ENCODE measurements at regions of chrX and their contacts with region 1.

Region 1: DNA sequence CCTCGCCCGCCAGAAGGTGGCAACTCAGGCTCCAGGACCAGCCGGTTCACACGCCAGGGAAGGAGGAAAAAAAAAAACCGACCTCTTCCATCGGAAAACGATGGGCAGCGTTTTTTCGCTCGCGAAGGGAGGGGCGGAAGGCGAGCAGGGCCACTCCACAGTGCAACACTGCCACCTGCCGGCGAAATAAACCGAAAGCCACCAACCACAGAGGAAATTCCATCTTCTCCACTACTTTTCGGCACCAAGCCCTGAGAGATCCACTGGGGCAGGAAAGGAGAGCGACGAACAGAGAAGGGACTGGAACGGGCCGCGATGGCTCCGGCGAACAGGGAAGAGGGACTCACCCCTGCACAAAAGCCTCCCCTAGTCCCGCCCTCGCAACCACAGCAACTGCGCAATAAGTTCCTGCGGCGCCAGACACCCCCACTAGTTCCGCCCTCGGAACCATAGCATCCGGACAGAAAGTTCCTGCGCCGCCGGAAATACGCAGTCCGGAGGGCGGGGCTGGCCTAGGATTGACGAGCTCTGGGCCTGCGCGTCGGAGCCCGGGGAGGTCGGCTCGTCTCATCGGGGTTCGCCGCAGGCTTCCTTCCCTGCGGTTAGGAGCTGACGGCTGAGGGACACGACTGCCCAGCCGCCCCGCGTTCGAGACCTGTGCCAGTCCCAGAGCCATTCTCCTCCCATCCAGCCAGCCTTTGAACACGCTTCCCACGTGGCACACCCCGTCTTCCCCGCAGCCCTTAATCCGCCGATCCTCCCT is 23.4 kb downstream of the FAM156A start:
- DNase-seq: peak; percentile 79
- ATAC-seq: peak; percentile 98
- H3K4me3 ChIP-seq: peak overlapping the region; percentile 81
- H3K27ac ChIP-seq: peak overlapping the region; percentile 96
- H3K4me1 ChIP-seq: peaks cover 3% of the 10 kb centered on the region; the same call in 1 of the 2 replicates
- H3K27me3 ChIP-seq: no peaks in the 10 kb centered on the region
- CTCF ChIP-seq: peak; percentile 82 to 97 (median 91)
- EP300 ChIP-seq: peak in 1 of 2 experiments; percentile 27; a peak in 1 of 4 replicates
- POLR2A ChIP-seq: peak; percentile 89
- RAD21 ChIP-seq: peak; percentile 90

Region 2: DNA sequence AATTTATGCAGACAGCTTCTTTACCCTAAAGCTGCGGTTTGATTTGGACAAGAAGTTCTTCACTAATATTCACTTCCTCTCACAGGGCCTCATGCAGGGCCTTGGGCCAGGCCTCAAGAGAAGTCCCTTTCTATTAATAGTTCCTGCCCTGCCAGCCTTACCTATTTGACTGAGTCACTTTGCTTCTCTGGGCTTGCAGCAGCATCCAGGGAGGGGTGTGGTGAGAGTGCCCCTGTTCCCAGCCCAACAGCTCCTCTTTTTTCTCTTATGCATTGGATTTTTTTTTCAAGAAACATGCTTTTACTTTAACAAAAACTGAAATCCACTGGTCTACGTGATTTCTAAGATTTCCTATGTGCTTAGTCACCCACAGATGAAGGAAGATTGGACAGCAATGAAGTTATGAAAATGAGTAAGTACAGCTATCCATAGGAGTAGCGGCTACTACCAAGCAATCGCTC is 11.1 kb before region 1 on chrX:
- CTCF ChIA-PET with region 1: interaction called, 14 read pairs
- POLR2A ChIA-PET with region 1: interaction called, 3 read pairs
- RAD21 ChIA-PET with region 1: interaction called, 18 read pairs
- SMC1A ChIA-PET with region 1: interaction called, 13 read pairs
- in situ Hi-C with region 1: no loop called
- intact Hi-C with region 1: no loop called
- DNase-seq: peak; percentile 46
- ATAC-seq: peak; percentile 65
- H3K4me3 ChIP-seq: peak overlapping the region; percentile 46; the same call in 1 of the 2 replicates
- H3K27ac ChIP-seq: peak overlapping the region; percentile 48
- H3K4me1 ChIP-seq: peaks cover 6% of the 10 kb centered on the region
- H3K27me3 ChIP-seq: no peaks in the 10 kb centered on the region
- CTCF ChIP-seq: no peak
- EP300 ChIP-seq: no peak
- POLR2A ChIP-seq: no peak
- RAD21 ChIP-seq: no peak